Activated CD4-positive, alpha-beta T cell treated with anti-CD3 and anti-CD28 coated beads for 36 hours (primary cell): ENCODE measurements at regions of chr16 and their contacts with region 1.

Region 1: DNA sequence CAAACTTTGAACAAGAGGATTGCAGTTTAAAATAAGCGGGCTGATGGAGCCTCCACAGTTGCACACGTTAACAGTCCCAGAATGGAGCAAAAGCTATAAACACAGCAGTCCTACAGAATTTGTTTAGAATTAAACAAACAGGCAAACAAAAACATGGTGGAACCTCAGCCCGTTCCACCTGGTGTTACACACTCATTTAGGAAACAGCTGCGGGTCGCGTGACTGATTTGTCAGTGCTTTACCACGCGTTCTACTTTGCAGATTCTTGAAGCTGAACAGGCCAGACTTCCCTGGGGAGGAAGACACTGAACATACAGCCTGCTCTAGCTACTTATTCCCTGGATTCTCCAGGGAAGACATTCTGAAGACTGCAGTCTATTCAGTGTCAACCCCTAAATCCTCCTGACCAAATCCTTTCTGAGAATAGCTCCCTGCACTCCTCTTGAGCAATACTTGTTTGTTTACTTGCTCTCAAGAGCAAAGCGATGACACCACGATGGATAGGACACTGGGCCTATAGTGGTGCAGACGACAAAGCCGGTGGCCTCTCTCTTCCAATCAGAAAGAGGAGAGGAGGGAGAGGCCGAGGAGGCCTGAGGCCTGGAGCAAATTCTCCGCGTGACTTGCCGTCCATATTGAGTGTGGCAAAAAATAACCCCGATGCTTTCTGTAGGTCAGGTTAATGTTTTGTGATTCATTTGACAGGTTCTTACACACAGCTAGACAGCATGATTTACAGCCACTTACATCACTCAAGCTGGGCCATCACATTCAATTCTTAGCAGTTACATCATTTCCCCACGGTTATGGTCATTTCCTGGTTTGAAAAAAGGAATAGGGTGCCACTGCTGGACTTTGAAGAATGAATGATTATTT is 4.0 kb upstream of the MAP1LC3B start:
- DNase-seq: peak; percentile 92
- ATAC-seq: peak; percentile 74
- H3K4me3 Mint-ChIP-seq: peak overlapping the region; percentile 36
- H3K27ac Mint-ChIP-seq: peak overlapping the region; percentile 95
- H3K4me1 Mint-ChIP-seq: peaks cover 49% of the 10 kb centered on the region
- H3K27me3 Mint-ChIP-seq: no peaks in the 10 kb centered on the region

Region 2: GRCh38 chr16:85554112-85554813 is 1833.9 kb before region 1 on chr16:
- CTCF ChIA-PET with region 1: no interaction called
- POLR2A ChIA-PET with region 1: no interaction called
- intact Hi-C with region 1: loop called in 1 of 2 experiments (anchors 5 kb)
- DNase-seq: peak; percentile 90
- ATAC-seq: peak; percentile 71
- H3K4me3 Mint-ChIP-seq: peak overlapping the region; percentile 81
- H3K27ac Mint-ChIP-seq: peak overlapping the region; percentile 88
- H3K4me1 Mint-ChIP-seq: peaks cover 32% of the 10 kb centered on the region
- H3K27me3 Mint-ChIP-seq: no peaks in the 10 kb centered on the region

Region 3: DNA sequence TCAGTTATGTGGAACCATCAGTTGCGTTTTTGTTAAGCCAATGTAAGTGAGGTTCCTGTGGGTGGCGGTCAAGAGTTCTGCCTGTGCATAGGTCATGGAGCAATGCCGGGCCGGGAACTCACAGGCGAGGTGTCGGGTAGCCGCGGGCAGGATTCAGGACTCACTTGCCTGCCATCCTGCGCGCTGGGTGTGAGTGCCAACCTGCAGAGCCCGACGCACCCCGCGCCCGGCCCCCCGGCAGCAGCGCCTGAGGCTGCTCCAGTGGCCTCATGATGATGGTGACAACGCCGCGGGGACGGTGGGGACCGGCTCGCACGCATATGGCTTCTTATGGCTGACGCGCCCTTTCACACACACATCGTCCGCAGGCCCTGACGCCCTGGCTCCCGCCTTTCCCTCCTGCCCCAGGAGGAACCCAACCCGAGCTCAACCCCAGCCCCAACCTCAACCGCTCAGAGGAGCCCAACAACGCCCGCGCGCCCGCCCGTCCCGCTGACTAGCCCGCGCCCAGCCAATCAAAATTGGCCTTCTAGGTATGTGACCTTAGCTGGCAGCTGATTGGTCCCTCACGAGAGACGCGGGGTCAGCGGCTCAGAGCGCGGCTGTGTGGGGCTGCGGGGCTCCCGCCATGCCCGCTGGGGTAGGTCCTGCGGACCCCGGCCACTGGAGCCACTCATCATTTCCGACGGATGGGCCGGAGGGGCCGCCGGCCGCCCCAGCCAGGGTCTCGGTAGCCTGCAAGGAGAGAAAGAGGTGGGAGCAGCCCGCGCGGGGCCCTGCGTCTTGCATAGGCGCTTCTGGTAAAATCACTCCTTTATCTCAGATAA is 71.0 kb before region 1 on chr16 and contains the start of gene C16orf95:
- CTCF ChIA-PET with region 1: interaction called, 5 read pairs
- POLR2A ChIA-PET with region 1: interaction called, 6 read pairs
- intact Hi-C with region 1: loop called (anchors 1 kb)
- DNase-seq: peak; percentile 97
- ATAC-seq: peak; percentile 90
- H3K4me3 Mint-ChIP-seq: peak within 1 kb of the TSS; percentile 97
- H3K27ac Mint-ChIP-seq: peak within 1 kb of the TSS; percentile 95
- H3K4me1 Mint-ChIP-seq: peaks cover 11% of the 10 kb centered on the region
- H3K27me3 Mint-ChIP-seq: no peaks in the 10 kb centered on the region
- total RNA-seq, gene C16orf95: 5.6 to 12.8 TPM

Region 4: GRCh38 chr16:87492721-87493607 is 104.8 kb after region 1 on chr16 and contains the start of gene ZCCHC14:
- CTCF ChIA-PET with region 1: interaction called, 3 read pairs
- POLR2A ChIA-PET with region 1: no interaction called
- intact Hi-C with region 1: loop called (anchors 1 to 5 kb)
- DNase-seq: peak; percentile 100
- ATAC-seq: peak; percentile 94
- H3K4me3 Mint-ChIP-seq: peak within 1 kb of the TSS; percentile 83
- H3K27ac Mint-ChIP-seq: peak within 1 kb of the TSS; percentile 85
- H3K4me1 Mint-ChIP-seq: peaks cover 48% of the 10 kb centered on the region
- H3K27me3 Mint-ChIP-seq: no peaks in the 10 kb centered on the region
- total RNA-seq, gene ZCCHC14: 10.1 to 12.9 TPM

Region 5: DNA sequence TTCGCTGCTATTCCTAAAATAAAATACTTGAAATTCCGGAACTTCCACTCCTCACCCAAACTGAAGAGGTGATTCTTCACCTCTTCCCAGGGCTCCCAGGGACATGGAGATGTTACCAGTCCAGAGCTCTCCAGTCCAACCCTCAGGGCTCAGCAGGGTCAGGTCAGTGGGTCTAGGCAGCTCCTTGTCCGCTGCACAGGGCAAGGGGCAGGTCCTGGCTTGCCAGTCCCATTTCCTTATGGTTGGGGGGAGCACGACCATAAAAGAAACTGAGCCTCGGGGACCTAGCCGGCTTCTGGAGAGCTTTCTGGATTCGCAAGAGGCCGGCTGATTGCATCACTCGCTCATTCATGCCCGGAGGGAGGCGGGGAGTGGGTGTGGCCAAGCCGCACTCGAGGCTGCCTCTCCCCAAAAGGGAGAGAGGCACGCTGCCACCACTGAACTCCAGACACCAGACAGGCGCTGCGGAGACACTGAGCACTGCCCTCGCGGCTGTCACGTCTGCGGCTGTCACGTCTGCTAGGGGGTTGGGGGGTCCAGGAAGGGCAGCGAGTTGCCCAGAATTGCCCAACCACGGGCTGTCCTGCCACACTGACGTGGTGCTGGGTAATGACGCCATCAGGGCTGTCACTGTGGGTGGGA is 465.4 kb after region 1 on chr16:
- CTCF ChIA-PET with region 1: no interaction called
- POLR2A ChIA-PET with region 1: no interaction called
- intact Hi-C with region 1: loop called in 1 of 2 experiments (anchors 5 kb)
- DNase-seq: peak; percentile 97
- ATAC-seq: peak; percentile 76
- H3K4me3 Mint-ChIP-seq: peak overlapping the region; percentile 55
- H3K27ac Mint-ChIP-seq: peak overlapping the region; percentile 92
- H3K4me1 Mint-ChIP-seq: peaks cover 61% of the 10 kb centered on the region
- H3K27me3 Mint-ChIP-seq: no peaks in the 10 kb centered on the region

Region 6: GRCh38 chr16:88569985-88570690 is 1182.0 kb after region 1 on chr16 and contains the start of gene ZC3H18:
- CTCF ChIA-PET with region 1: no interaction called
- POLR2A ChIA-PET with region 1: no interaction called
- intact Hi-C with region 1: loop called in 1 of 2 experiments (anchors 5 kb)
- DNase-seq: peak; percentile 99
- ATAC-seq: peak; percentile 83
- H3K4me3 Mint-ChIP-seq: peak within 1 kb of the TSS; percentile 88
- H3K27ac Mint-ChIP-seq: peak within 1 kb of the TSS; percentile 79
- H3K4me1 Mint-ChIP-seq: peaks cover 44% of the 10 kb centered on the region
- H3K27me3 Mint-ChIP-seq: no peaks in the 10 kb centered on the region
- total RNA-seq, gene ZC3H18: 70.0 to 76.4 TPM